ENCODE measurements at regions of chr4 and their contacts with region 1.

Region 1: GRCh38 chr4:74189331-74190043 is 31.6 kb downstream of the MTHFD2L start:
- DNase-seq: no peak
- H3K4me3 ChIP-seq: no peak overlapping the region
- CTCF ChIP-seq: peak; percentile 61

Region 2: DNA sequence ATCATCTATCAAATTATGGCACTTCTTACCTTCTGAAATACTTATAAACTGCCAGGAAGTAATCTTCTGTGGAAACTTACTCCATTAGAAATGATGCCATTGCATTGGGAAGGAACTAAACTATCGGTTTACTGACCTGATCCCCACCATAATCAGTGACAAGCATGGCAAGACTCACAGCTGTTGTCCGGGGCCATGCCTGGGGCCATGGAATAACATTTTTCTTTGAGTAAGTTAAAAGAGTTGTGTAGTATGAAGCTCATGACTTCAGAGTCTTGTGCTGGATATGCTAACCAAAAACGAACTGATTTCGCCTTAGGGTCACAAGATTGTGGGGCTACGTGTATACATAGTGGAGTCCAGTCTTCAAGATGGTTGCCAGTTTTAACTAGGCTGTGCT is 16.2 kb before region 1 on chr4:
- CTCF ChIA-PET with region 1: interaction called, 12 read pairs
- POLR2A ChIA-PET with region 1: no interaction called
- DNase-seq: no peak
- H3K4me3 ChIP-seq: no peak overlapping the region
- CTCF ChIP-seq: no peak

Region 3: GRCh38 chr4:74206088-74206825 is 16.8 kb after region 1 on chr4:
- CTCF ChIA-PET with region 1: interaction called, 21 read pairs
- POLR2A ChIA-PET with region 1: no interaction called
- DNase-seq: no peak
- H3K4me3 ChIP-seq: no peak overlapping the region
- CTCF ChIP-seq: no peak

Region 4: GRCh38 chr4:74228691-74229640 is 39.5 kb after region 1 on chr4:
- CTCF ChIA-PET with region 1: interaction called, 10 read pairs
- POLR2A ChIA-PET with region 1: no interaction called
- DNase-seq: no peak
- H3K4me3 ChIP-seq: no peak overlapping the region
- CTCF ChIP-seq: peak; percentile 76

Region 5: GRCh38 chr4:74293558-74293957 is 104.1 kb after region 1 on chr4:
- CTCF ChIA-PET with region 1: interaction called, 12 read pairs
- POLR2A ChIA-PET with region 1: no interaction called
- DNase-seq: no peak
- H3K4me3 ChIP-seq: no peak overlapping the region
- CTCF ChIP-seq: no peak

Region 6: DNA sequence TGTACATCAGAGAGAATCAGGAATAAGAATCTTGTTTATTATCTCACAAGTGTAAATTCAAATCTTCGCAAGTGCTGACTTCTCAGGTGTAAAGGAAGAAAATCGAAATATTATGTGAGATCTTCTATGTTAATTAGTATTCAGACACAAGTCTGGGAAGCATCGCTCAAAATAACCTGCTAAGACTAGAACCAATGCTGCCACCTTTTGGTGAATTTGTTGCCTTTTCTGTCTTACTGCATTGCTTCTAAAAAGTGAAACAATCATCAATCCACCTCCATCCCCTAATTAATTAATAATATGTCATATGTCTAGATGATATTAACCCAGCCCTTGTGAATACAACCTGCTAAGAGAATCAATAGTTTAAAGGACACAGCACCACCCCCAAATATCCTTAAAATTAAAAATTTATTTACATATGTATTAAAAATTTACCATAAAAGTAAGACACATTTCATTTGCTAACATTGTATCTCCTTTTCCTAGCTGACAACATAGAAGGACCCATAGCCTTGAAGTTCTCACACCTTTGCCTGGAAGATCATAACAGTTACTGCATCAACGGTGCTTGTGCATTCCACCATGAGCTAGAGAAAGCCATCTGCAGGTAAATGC is 122.3 kb after region 1 on chr4:
- CTCF ChIA-PET with region 1: interaction called, 108 read pairs
- POLR2A ChIA-PET with region 1: no interaction called
- DNase-seq: no peak
- H3K4me3 ChIP-seq: no peak overlapping the region
- CTCF ChIP-seq: peak; percentile 56

Region 7: GRCh38 chr4:74320559-74321118 is 131.2 kb after region 1 on chr4:
- CTCF ChIA-PET with region 1: interaction called, 108 read pairs
- POLR2A ChIA-PET with region 1: no interaction called
- DNase-seq: no peak
- H3K4me3 ChIP-seq: no peak overlapping the region; the same call in 1 of the 2 replicates
- CTCF ChIP-seq: peak; percentile 19